ENCODE measurements at regions of chr12 and their contacts with region 1.

Region 1: DNA sequence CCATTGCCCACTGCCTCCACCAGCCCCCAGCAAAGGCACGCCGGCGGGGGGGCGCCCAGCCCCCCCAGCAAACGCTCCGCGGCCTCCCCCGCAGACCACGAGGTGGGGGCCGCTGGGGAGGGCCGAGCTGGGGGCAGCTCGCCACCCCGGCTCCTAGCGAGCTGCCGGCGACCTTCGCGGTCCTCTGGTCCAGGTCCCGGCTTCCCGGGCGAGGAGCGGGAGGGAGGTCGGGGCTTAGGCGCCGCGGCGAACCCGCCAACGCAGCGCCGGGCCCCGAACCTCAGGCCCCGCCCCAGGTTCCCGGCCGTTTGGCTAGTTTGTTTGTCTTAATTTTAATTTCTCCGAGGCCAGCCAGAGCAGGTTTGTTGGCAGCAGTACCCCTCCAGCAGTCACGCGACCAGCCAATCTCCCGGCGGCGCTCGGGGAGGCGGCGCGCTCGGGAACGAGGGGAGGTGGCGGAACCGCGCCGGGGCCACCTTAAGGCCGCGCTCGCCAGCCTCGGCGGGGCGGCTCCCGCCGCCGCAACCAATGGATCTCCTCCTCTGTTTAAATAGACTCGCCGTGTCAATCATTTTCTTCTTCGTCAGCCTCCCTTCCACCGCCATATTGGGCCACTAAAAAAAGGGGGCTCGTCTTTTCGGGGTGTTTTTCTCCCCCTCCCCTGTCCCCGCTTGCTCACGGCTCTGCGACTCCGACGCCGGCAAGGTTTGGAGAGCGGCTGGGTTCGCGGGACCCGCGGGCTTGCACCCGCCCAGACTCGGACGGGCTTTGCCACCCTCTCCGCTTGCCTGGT is at the start of gene CDKN1B:
- DNase-seq: peak; percentile 97
- H3K4me3 ChIP-seq: peak within 1 kb of the TSS; percentile 77
- H3K4me3 Mint-ChIP-seq: peak within 1 kb of the TSS; percentile 76
- H3K27ac Mint-ChIP-seq: peak within 1 kb of the TSS; percentile 71
- H3K4me1 ChIP-seq: peaks cover 41% of the 10 kb centered on the region
- H3K4me1 Mint-ChIP-seq: peaks cover 47% of the 10 kb centered on the region
- H3K27me3 ChIP-seq: no peaks in the 10 kb centered on the region
- H3K27me3 Mint-ChIP-seq: no peaks in the 10 kb centered on the region
- CTCF ChIP-seq: no peak
- total RNA-seq, gene CDKN1B: 107 and 115 TPM in 2 replicates

Region 2: DNA sequence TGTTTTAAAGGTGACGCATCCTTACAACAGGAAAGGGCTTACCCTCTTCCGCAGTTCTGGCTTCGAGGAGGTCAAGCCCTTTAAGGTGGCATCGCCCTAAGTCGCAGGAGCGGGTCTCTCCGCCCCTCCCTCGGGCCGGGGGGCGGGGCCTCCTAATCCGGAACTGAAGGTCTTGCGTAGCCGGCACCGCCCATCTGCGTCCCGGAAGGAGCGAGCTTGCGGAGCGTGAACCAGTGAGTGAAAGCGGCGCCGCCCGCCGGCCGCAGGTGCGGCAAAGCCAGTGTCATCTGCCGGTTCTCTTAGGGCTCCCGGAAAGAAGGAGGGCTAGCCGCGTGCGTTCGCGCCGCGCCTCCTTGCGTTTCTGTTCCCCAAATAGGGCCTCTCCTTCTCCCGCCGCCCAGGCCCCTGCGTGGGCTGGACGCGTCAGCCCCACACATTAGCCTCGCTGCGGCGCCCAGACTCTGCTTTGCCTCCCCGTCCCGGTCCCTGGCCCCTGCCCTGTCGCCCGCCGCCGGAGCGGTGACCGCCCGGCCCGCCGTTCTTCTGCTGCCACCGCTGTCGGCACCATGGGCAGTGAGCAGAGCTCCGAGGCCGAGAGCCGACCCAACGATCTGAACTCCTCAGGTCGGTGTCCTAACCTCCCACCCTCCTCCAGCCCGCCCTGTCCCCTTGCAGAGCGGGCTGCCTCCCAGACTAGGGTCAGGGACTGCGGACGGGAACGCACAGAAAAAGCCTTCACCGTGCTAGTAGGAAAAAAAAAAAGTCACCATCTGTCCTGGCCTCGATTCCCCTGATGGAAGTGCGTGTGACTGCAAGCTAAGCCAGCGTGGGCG is 359.9 kb before region 1 on chr12 and contains the start of gene BORCS5:
- CTCF ChIA-PET with region 1: no interaction called
- POLR2A ChIA-PET with region 1: interaction called, 7 read pairs
- intact Hi-C with region 1: loop called (anchors 5 kb)
- DNase-seq: peak; percentile 99
- H3K4me3 ChIP-seq: peak within 1 kb of the TSS; percentile 86
- H3K4me3 Mint-ChIP-seq: peak within 1 kb of the TSS; percentile 94
- H3K27ac Mint-ChIP-seq: peak within 1 kb of the TSS; percentile 96
- H3K4me1 ChIP-seq: peaks cover 7% of the 10 kb centered on the region; the same call in 1 of the 2 replicates
- H3K4me1 Mint-ChIP-seq: peaks cover 12% of the 10 kb centered on the region
- H3K27me3 ChIP-seq: no peaks in the 10 kb centered on the region
- H3K27me3 Mint-ChIP-seq: no peaks in the 10 kb centered on the region
- CTCF ChIP-seq: peak in 1 of 2 experiments; percentile 43
- total RNA-seq, gene BORCS5: 25.5 and 25.7 TPM in 2 replicates

Region 3: DNA sequence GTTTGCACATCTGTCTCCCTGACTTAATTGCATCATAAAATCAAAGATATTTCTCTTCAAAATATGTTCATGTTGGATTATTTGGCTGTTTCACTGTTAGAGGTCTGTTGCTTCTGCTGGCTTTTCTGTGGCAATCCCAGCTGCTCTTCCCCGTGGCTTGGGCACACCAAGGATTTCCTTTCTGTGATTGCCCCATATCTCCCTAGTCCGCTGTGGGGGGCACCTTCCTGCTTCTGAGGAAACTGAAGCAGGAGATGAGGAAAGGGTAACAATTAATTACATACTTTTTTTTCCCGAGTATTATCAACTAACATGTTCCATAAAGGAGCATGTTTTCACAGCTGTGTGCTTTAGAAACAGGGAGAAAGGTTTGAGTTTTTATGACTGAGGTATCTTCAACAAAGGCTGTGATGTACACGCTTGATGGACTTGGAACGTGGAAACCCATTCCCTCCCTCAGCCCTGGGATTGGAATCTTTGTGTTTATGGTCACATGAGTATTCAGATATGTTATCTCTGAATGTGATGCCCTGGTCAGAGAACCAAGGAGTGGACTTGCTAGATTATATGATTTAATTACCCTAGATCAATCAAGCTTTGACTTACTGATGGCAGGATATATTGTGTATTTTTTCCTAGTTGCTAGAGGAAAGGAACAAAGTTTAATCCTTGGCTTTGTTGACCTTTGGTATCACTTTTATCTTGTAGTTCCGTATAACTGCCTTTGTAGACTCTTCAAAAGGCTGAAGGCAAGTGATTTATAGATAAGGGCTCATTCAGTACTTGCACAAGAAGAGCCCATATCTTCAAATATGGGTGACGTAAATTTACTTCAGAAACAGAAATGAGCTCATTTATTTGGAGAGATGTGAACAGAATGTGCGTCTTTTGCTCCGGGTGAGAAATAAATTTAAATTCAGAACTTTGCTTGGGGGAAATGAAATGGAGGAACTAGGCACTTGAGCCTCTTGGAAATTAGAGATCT is 313.4 kb before region 1 on chr12:
- CTCF ChIA-PET with region 1: no interaction called
- POLR2A ChIA-PET with region 1: interaction called, 3 read pairs
- intact Hi-C with region 1: loop called (anchors 1 kb)
- DNase-seq: peak; percentile 96 to 97
- H3K4me3 ChIP-seq: no peak overlapping the region
- H3K4me3 Mint-ChIP-seq: peak overlapping the region; percentile 54
- H3K27ac Mint-ChIP-seq: peak overlapping the region; percentile 94
- H3K4me1 ChIP-seq: peaks cover 61% of the 10 kb centered on the region
- H3K4me1 Mint-ChIP-seq: peaks cover 60% of the 10 kb centered on the region
- H3K27me3 ChIP-seq: no peaks in the 10 kb centered on the region
- H3K27me3 Mint-ChIP-seq: no peaks in the 10 kb centered on the region
- CTCF ChIP-seq: no peak

Region 4: GRCh38 chr12:12736759-12737676 is 20.0 kb after region 1 on chr12:
- CTCF ChIA-PET with region 1: interaction called, 19 read pairs
- POLR2A ChIA-PET with region 1: interaction called, 3 read pairs
- intact Hi-C with region 1: no loop called
- DNase-seq: peak in 1 of 2 experiments; percentile 47
- H3K4me3 ChIP-seq: no peak overlapping the region
- H3K4me3 Mint-ChIP-seq: no peak overlapping the region
- H3K27ac Mint-ChIP-seq: peak overlapping the region; percentile 10
- H3K4me1 ChIP-seq: no peaks in the 10 kb centered on the region; the same call in 1 of the 2 replicates
- H3K4me1 Mint-ChIP-seq: peaks cover 25% of the 10 kb centered on the region
- H3K27me3 ChIP-seq: no peaks in the 10 kb centered on the region
- H3K27me3 Mint-ChIP-seq: no peaks in the 10 kb centered on the region
- CTCF ChIP-seq: peak; percentile 66 to 68

Region 5: DNA sequence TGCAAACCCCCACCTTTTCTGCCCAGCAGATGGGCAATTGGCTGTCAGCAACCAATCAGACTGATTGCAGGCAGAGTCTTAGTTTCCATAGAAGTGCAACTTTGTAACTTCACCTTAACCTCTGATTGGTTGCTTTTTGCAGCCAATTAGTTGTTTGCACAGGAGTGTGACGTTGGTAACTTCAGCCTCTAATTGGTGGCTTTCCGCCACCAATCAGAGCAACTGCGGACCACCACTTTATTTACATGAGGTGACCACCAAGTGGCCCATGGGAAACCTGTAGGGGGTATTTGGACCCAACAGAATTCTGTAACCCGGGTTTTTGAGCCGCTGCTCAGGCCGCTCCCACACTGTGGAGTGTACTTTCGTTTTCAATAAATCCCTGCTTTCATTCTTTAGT is 32.4 kb after region 1 on chr12:
- CTCF ChIA-PET with region 1: no interaction called
- POLR2A ChIA-PET with region 1: no interaction called
- intact Hi-C with region 1: no loop called
- DNase-seq: no peak
- H3K4me3 ChIP-seq: no peak overlapping the region
- H3K4me3 Mint-ChIP-seq: no peak overlapping the region
- H3K27ac Mint-ChIP-seq: no peak overlapping the region
- H3K4me1 ChIP-seq: no peaks in the 10 kb centered on the region
- H3K4me1 Mint-ChIP-seq: peaks cover 14% of the 10 kb centered on the region
- H3K27me3 ChIP-seq: no peaks in the 10 kb centered on the region
- H3K27me3 Mint-ChIP-seq: no peaks in the 10 kb centered on the region
- CTCF ChIP-seq: no peak

Region 6: GRCh38 chr12:12786716-12787601 is 70.0 kb after region 1 on chr12:
- CTCF ChIA-PET with region 1: no interaction called
- POLR2A ChIA-PET with region 1: interaction called, 12 read pairs
- intact Hi-C with region 1: no loop called
- DNase-seq: peak; percentile 89 to 94
- H3K4me3 ChIP-seq: peak overlapping the region; percentile 65
- H3K4me3 Mint-ChIP-seq: peak overlapping the region; percentile 88
- H3K27ac Mint-ChIP-seq: peak overlapping the region; percentile 95
- H3K4me1 ChIP-seq: peaks cover 48% of the 10 kb centered on the region
- H3K4me1 Mint-ChIP-seq: peaks cover 23% of the 10 kb centered on the region
- H3K27me3 ChIP-seq: no peaks in the 10 kb centered on the region
- H3K27me3 Mint-ChIP-seq: no peaks in the 10 kb centered on the region
- CTCF ChIP-seq: peak in 1 of 2 experiments; percentile 26